ENCODE measurements at regions of chr16 and their contacts with region 1.

Region 1: DNA sequence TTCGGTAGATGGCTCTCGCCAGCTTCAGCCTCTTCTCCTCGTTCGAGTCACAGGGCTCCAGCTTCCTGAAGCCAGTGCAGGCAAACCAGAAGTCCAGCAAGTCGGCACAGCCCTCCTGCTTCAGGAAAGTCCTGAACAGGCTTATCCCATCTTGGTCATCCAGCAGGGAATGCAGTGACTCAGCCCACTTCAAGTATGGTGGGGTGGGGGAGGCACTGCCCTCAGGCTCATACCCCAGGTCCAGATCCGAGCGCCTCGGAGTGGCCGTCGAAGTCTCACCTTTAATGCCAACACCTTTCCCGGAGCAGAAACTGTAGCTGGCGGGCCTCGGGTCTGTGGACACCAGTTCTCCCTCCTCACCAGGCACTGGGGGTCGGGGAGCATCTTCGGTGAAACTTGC is 5.9 kb downstream of the AXIN1 start:
- DNase-seq: peak in 1 of 6 donors; percentile 12
- ATAC-seq: no peak
- H3K4me3 ChIP-seq: no peak overlapping the region
- H3K27ac ChIP-seq: no peak overlapping the region
- H3K4me1 ChIP-seq: peaks cover 0 to 6% (median 4%) of the 10 kb centered on the region in 3 donors
- H3K27me3 ChIP-seq: no peaks in the 10 kb centered on the region
- CTCF ChIP-seq: no peak

Region 2: DNA sequence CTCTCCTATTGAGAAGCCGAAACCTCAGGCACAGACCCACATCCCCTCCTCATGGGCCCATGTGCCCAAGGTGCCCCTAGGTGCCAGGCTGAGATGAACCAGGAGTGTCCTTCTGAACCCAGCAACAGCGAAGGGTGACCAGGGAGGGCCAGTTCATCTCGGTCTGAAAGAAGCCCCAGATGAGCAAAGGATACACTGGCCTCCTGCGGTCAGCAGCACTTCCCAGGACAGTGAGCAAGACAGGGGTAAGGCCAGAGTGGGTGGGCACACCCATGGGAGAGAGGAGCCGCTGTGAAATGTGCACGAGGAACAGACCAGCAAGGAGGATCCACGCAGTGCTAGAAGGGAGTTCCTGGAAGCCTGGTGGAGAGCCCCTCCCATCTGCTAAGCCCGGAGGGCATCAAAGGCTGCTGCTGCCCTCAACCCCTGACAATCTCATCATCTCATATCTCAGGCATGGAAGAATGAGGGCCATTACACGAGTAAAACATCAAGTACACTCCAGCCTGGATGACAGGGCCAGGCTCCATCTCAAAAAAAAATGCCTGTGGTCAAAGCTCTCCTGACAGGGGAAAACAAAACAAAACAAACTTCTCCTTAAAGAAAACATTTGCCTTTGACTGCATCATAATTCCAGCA is 197.4 kb before region 1 on chr16:
- intact Hi-C with region 1: no loop called
- DNase-seq: no peak
- ATAC-seq: no peak
- H3K4me3 ChIP-seq: no peak overlapping the region
- H3K27ac ChIP-seq: no peak overlapping the region
- H3K4me1 ChIP-seq: no peaks in the 10 kb centered on the region
- H3K27me3 ChIP-seq: no peaks in the 10 kb centered on the region
- CTCF ChIP-seq: no peak

Region 3: GRCh38 chr16:249431-249830 is 97.2 kb before region 1 on chr16:
- intact Hi-C with region 1: loop called in 2 of 3 experiments (anchors 5 to 10 kb)
- DNase-seq: peak in 1 of 6 donors; percentile 25
- ATAC-seq: no peak
- H3K4me3 ChIP-seq: no peak overlapping the region
- H3K27ac ChIP-seq: peak overlapping the region in 2 of 4 donors; percentile 74 to 76
- H3K4me1 ChIP-seq: peaks cover 0 to 9% (median 7%) of the 10 kb centered on the region in 3 donors
- H3K27me3 ChIP-seq: no peaks in the 10 kb centered on the region
- CTCF ChIP-seq: no peak

Measured in pancreas (tissue), 10 donors.